ENCODE measurements at regions of chr22 and their contacts with region 1.

Region 1: DNA sequence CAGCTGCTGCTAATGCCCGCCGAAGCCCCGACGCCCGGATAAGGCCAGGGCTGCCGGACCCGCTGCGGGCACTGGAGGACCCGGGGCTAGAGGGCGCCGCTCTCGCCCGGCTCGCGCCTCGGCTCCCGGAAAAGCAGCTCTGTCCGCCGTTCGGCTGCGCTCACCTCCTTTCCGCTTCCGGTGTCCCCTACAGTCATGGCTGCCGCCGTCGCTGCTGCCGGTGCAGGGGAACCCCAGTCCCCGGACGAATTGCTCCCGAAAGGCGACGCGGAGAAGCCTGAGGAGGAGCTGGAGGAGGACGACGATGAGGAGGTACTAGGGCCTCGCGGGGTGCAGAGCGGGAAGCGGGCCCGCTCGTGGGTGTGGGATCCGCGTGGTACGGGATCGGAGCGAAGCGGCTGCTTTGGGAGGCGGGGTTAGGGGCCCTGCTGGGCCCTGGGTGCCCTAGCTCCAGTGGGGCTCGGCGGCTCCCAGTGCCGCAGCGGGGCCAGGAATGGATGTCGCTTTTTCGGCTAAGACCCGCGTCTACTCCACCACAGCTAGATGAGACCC is at the start of gene TOMM22:
- DNase-seq: peak; percentile 96
- H3K4me3 Mint-ChIP-seq: peak within 1 kb of the TSS; percentile 100
- H3K27ac Mint-ChIP-seq: peak within 1 kb of the TSS; percentile 99
- H3K4me1 Mint-ChIP-seq: peaks cover 17% of the 10 kb centered on the region
- H3K27me3 Mint-ChIP-seq: no peaks in the 10 kb centered on the region
- total RNA-seq, gene TOMM22: 169 and 172 TPM in 2 replicates

Region 2: GRCh38 chr22:38601221-38601764 is 80.6 kb before region 1 on chr22:
- intact Hi-C with region 1: no loop called
- DNase-seq: no peak
- H3K4me3 Mint-ChIP-seq: no peak overlapping the region
- H3K27ac Mint-ChIP-seq: no peak overlapping the region
- H3K4me1 Mint-ChIP-seq: no peaks in the 10 kb centered on the region
- H3K27me3 Mint-ChIP-seq: peaks cover 21% of the 10 kb centered on the region

Region 3: GRCh38 chr22:38656256-38657044 is 25.4 kb before region 1 on chr22 and contains the starts of genes CBY1 and FAM227A:
- intact Hi-C with region 1: loop called (anchors 1 kb)
- DNase-seq: peak; percentile 96
- H3K4me3 Mint-ChIP-seq: peak within 1 kb of the TSS; percentile 93
- H3K27ac Mint-ChIP-seq: peak within 1 kb of the TSS; percentile 97
- H3K4me1 Mint-ChIP-seq: peaks cover 11% of the 10 kb centered on the region
- H3K27me3 Mint-ChIP-seq: no peaks in the 10 kb centered on the region
- total RNA-seq, gene CBY1: 8.4 and 13.3 TPM in 2 replicates
- total RNA-seq, gene FAM227A: 0.30 and 0.71 TPM in 2 replicates

Region 4: GRCh38 chr22:38696606-38697424 is 15.0 kb after region 1 on chr22:
- intact Hi-C with region 1: loop called (anchors 1 kb)
- DNase-seq: peak; percentile 79
- H3K4me3 Mint-ChIP-seq: peak overlapping the region; percentile 98
- H3K27ac Mint-ChIP-seq: peak overlapping the region; percentile 81
- H3K4me1 Mint-ChIP-seq: peaks cover 55% of the 10 kb centered on the region
- H3K27me3 Mint-ChIP-seq: peaks cover 2% of the 10 kb centered on the region

Region 5: GRCh38 chr22:38715176-38715764 is 33.4 kb after region 1 on chr22:
- intact Hi-C with region 1: no loop called
- DNase-seq: no peak
- H3K4me3 Mint-ChIP-seq: no peak overlapping the region
- H3K27ac Mint-ChIP-seq: peak overlapping the region; percentile 46
- H3K4me1 Mint-ChIP-seq: peaks cover 44% of the 10 kb centered on the region
- H3K27me3 Mint-ChIP-seq: no peaks in the 10 kb centered on the region